ENCODE measurements at regions of chr7 and their contacts with region 1.

Region 1: DNA sequence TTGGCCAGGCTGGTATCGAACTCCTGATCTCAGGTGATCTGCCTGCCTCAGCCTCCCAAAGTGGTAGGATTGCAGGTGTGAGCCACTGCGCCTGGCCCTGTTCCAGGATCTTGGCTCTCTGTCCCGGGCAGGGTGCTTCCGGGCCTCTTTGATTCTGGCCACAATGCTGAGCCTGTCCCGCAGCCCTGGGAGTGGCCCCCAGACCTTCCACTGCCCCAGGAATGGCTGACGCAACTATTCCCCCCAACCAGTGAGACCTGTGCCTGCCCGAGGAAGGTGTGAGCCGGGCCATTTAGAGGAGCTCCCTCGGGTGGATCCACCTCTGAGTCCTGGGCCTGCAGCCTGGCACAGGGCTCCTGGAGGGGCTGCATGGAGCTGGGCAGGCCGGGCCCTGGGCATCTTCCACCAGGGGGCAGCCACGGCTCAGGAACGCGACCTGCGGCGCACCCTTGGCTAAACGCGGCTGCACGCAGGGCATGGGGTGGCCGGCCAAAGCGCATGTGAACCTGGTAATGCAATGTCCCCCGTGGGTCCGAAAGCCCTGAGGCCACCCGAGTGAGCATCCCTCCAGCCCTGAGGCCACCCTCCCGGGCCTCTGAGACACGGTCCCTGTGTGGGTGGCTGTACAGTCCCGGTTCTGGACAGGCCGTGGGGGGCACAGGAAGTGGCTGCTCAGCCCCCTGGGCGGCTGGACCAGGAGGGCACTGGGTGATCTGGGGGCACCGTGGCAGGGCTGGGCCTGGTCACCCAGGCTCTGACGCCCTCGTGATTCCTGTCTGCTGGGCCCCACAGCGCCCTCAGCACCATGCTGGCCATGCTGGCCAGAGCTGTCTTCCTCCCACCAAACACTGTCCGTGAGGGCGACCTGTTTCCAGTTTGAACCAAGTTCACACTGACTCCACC is 24.8 kb downstream of the GRIFIN start:
- DNase-seq: peak; percentile 99
- H3K4me3 ChIP-seq: peak overlapping the region; percentile 29 to 52
- H3K27ac ChIP-seq: peak overlapping the region in 1 of 2 experiments; percentile 3; a peak in 1 of 4 replicates
- H3K4me1 ChIP-seq: peaks cover 0 to 8% of the 10 kb centered on the region in 2 experiments; a peak in 2 of 4 replicates
- H3K27me3 ChIP-seq: no peaks in the 10 kb centered on the region
- CTCF ChIP-seq: peak; percentile 97
- EP300 ChIP-seq: no peak
- RAD21 ChIP-seq: peak; percentile 97

Region 2: DNA sequence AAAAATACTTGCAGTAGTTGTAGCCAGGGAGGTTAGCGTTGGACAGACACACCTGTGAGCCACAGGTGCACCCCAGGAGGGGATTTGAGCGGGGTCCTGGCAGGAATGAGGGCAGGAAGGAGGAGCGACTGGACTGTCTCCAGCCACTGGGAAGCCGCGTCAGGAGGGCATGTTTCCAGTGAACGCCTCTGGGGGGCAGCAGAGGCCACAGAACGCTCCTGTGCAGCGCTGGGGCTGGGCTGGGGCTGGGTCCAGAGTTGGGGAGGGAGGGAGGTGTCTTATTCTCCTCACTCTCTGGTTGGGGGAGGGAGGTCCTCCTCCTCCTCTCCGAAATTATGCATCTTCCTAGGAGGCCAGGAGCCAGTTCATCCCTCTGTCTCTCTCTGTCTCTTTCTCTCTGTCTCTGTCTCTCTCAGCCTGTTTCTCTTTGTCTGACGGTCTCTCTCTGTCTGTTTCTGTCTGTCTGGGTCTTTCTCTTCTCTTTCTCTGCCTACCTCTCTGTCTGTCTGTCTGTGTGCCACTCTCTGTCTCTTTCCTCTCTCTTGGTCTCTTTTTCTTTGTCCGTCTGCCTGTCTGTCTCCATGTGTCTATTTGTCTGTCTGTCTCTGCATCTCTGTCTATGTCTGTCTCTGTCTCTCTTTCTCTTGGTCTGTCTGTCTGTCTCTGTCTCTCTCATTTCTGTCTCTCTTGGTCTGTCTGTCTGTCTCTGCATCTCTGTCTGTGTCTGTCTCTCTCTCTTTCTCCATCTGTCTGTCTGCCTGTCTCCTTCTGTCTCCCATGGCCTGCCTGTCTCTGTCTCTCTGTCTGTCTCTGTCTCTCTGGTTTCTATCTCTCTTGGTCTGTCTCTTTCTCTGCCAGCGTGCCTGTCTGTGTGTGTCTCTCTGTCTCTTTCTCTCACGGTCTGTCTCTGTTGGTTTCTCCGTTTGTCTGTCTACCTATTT is 871.7 kb before region 1 on chr7:
- CTCF ChIA-PET with region 1: no interaction called
- POLR2A ChIA-PET with region 1: no interaction called
- DNase-seq: peak; percentile 93
- H3K4me3 ChIP-seq: no peak overlapping the region
- H3K27ac ChIP-seq: peak overlapping the region in 1 of 2 experiments; percentile 31; a peak in 1 of 4 replicates
- H3K4me1 ChIP-seq: peaks cover 0 to 12% of the 10 kb centered on the region in 2 experiments; a peak in 1 of 4 replicates
- H3K27me3 ChIP-seq: no peaks in the 10 kb centered on the region
- CTCF ChIP-seq: peak; percentile 95
- EP300 ChIP-seq: no peak
- RAD21 ChIP-seq: peak; percentile 98

Region 3: DNA sequence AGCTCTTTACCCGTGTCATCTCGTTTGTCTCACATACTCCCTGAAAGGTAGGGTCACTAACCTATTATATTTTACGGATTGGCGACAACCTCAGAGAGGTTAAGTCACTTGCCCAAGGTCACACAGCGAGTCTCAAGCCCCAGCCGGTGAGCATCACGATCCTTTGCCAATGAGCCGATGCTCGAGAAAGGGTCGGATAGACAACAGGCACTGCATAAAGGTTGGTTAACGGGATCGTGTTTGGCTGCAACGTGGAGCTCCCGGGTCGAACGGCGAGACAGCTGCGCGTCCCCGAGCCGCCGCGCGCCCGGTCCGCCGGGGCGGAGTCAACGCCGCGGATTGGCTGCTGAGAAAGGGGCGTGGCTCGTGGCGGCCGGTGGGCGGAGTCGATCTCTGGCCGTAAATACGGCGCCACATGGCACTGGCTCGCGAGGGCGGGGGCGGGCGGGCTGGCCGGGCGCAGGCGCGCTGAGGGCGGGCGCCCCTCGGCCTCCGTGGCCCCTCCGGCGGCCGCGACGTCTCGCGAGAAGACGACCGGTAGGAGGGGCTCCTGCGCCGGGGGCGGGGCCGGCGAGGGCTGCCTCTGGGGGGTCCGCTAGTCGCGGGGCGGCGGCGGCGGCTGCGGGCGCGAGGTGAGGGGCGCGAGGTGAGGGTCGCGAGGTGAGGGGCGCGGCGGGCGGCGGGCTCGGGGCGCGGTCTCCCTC is 48.3 kb before region 1 on chr7 and contains the start of gene CHST12:
- CTCF ChIA-PET with region 1: interaction called, 23 read pairs
- POLR2A ChIA-PET with region 1: no interaction called
- DNase-seq: peak; percentile 100
- H3K4me3 ChIP-seq: peak within 1 kb of the TSS; percentile 66 to 76
- H3K27ac ChIP-seq: peak within 1 kb of the TSS; percentile 26 to 65; a peak in 2 of 4 replicates
- H3K4me1 ChIP-seq: peaks cover 10 to 30% of the 10 kb centered on the region in 2 experiments; a peak in 2 of 4 replicates
- H3K27me3 ChIP-seq: no peaks in the 10 kb centered on the region
- CTCF ChIP-seq: no peak
- EP300 ChIP-seq: no peak; a peak in 1 of 4 replicates
- RAD21 ChIP-seq: no peak
- polyA plus RNA-seq, gene CHST12: 26.7 and 32.7 TPM in 2 replicates

Region 4: GRCh38 chr7:2440608-2441245 is 10.7 kb before region 1 on chr7:
- CTCF ChIA-PET with region 1: interaction called, 44 read pairs
- POLR2A ChIA-PET with region 1: interaction called, 3 read pairs
- DNase-seq: peak; percentile 31
- H3K4me3 ChIP-seq: no peak overlapping the region
- H3K27ac ChIP-seq: no peak overlapping the region
- H3K4me1 ChIP-seq: peaks cover 0 to 3% of the 10 kb centered on the region in 2 experiments; a peak in 1 of 4 replicates
- H3K27me3 ChIP-seq: no peaks in the 10 kb centered on the region
- CTCF ChIP-seq: no peak
- EP300 ChIP-seq: no peak
- RAD21 ChIP-seq: no peak

Region 5: GRCh38 chr7:2477447-2478398 is 26.3 kb after region 1 on chr7:
- CTCF ChIA-PET with region 1: interaction called, 48 read pairs
- POLR2A ChIA-PET with region 1: no interaction called
- DNase-seq: peak; percentile 100
- H3K4me3 ChIP-seq: no peak overlapping the region
- H3K27ac ChIP-seq: no peak overlapping the region
- H3K4me1 ChIP-seq: peaks cover 0 to 12% of the 10 kb centered on the region in 2 experiments; a peak in 1 of 4 replicates
- H3K27me3 ChIP-seq: no peaks in the 10 kb centered on the region
- CTCF ChIP-seq: peak; percentile 91
- EP300 ChIP-seq: no peak
- RAD21 ChIP-seq: peak; percentile 93

Region 6: DNA sequence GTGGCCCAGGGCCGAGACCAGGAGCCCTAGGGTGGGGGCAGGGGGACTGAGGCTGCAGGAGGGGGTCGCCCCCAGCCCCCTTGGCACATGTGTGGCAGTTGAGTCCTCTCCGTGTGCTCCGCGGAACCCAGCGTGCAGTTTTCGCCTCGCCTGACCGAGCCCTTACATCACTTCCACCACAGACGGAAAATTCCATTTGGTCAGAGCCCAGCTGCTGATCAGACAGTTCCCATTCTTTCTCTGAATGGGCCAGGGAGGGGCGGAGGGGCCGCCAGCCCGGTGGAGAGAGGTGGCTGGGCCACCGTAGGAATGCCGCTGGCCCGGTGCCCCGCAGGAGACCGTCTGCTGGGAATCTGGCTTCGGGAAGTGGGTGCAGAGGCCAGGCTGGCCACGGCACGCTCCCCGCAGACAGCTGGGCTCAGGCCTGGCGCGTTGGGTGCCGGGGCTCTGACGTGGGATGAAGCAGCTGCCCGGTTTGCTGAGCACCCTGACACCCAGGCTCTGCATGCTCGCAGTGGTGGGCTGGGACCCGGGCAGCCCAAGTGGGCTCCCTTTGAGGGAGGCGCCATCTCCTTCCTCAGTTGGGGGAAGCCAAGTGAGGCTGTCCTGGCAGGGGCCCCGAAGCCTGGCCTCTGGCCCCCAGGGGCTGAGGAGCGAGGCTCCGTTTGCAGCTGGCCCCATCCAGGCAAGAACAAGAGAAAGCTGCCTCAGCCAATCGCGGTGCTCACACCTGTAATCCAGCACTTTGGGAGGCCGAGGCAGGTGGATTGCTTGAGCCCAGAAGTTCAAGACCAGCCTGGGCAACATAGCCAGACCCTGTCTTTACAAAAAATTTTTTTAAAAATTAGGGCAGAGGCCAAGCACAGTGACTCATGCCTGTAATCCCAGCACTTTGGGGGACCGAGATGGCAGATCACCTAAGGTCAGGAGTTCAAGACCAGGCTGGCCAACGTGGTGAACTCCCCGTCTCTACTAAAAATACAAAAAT is 190.3 kb after region 1 on chr7:
- CTCF ChIA-PET with region 1: interaction called, 16 read pairs
- POLR2A ChIA-PET with region 1: interaction called, 4 read pairs
- DNase-seq: peak; percentile 75
- H3K4me3 ChIP-seq: no peak overlapping the region
- H3K27ac ChIP-seq: peak overlapping the region; percentile 71 to 95
- H3K4me1 ChIP-seq: peaks cover 61 to 91% of the 10 kb centered on the region in 2 experiments
- H3K27me3 ChIP-seq: no peaks in the 10 kb centered on the region
- CTCF ChIP-seq: no peak
- EP300 ChIP-seq: peak; percentile 40 to 82; a peak in 2 of 4 replicates
- RAD21 ChIP-seq: no peak

Region 7: GRCh38 chr7:2670720-2671391 is 219.4 kb after region 1 on chr7:
- CTCF ChIA-PET with region 1: interaction called, 25 read pairs
- POLR2A ChIA-PET with region 1: no interaction called
- DNase-seq: peak; percentile 96
- H3K4me3 ChIP-seq: no peak overlapping the region; a peak in 1 of 4 replicates
- H3K27ac ChIP-seq: no peak overlapping the region
- H3K4me1 ChIP-seq: peaks cover 0 to 3% of the 10 kb centered on the region in 2 experiments; a peak in 1 of 4 replicates
- H3K27me3 ChIP-seq: no peaks in the 10 kb centered on the region
- CTCF ChIP-seq: peak; percentile 97
- EP300 ChIP-seq: no peak
- RAD21 ChIP-seq: peak; percentile 93

Region 8: GRCh38 chr7:2719007-2719406 is 267.6 kb after region 1 on chr7:
- CTCF ChIA-PET with region 1: interaction called, 12 read pairs
- POLR2A ChIA-PET with region 1: no interaction called
- DNase-seq: peak; percentile 89
- H3K4me3 ChIP-seq: no peak overlapping the region
- H3K27ac ChIP-seq: no peak overlapping the region
- H3K4me1 ChIP-seq: peaks cover 0 to 27% of the 10 kb centered on the region in 2 experiments; a peak in 1 of 4 replicates
- H3K27me3 ChIP-seq: no peaks in the 10 kb centered on the region
- CTCF ChIP-seq: peak; percentile 66
- EP300 ChIP-seq: no peak
- RAD21 ChIP-seq: peak; percentile 46

Measured in SK-N-SH (cell line).